ENCODE measurements at regions of chr5 and their contacts with region 1.

Region 1: GRCh38 chr5:9365512-9365911 is 180.4 kb downstream of the SEMA5A start:
- H3K4me3 Mint-ChIP-seq: no peak overlapping the region
- H3K27ac Mint-ChIP-seq: no peak overlapping the region
- H3K4me1 Mint-ChIP-seq: no peaks in the 10 kb centered on the region
- H3K27me3 Mint-ChIP-seq: peaks cover 1% of the 10 kb centered on the region

Region 2: DNA sequence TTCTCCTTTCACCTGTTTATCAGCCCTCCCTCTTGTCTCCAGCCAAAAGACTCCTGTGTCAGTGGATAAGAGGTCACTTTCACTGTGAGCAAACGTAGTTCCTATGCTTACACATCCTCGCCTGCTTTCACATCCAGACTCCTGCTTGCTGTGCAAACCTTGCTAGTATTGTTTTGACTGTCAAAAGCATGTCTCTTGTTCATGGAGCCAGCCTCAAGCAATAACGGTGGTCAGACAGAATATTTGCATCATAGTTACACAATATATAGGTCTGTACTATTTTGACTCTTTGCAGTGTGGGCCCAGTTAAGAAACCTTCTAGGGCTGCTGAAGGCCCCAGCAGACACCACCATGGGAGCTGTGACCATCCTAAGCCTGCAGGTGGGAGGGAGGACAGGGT is 239.7 kb before region 1 on chr5:
- intact Hi-C with region 1: no loop called
- H3K4me3 Mint-ChIP-seq: no peak overlapping the region
- H3K27ac Mint-ChIP-seq: no peak overlapping the region
- H3K4me1 Mint-ChIP-seq: no peaks in the 10 kb centered on the region
- H3K27me3 Mint-ChIP-seq: no peaks in the 10 kb centered on the region

Region 3: GRCh38 chr5:9283021-9283420 is 82.5 kb before region 1 on chr5:
- intact Hi-C with region 1: no loop called
- H3K4me3 Mint-ChIP-seq: no peak overlapping the region
- H3K27ac Mint-ChIP-seq: no peak overlapping the region
- H3K4me1 Mint-ChIP-seq: no peaks in the 10 kb centered on the region
- H3K27me3 Mint-ChIP-seq: no peaks in the 10 kb centered on the region

Region 4: DNA sequence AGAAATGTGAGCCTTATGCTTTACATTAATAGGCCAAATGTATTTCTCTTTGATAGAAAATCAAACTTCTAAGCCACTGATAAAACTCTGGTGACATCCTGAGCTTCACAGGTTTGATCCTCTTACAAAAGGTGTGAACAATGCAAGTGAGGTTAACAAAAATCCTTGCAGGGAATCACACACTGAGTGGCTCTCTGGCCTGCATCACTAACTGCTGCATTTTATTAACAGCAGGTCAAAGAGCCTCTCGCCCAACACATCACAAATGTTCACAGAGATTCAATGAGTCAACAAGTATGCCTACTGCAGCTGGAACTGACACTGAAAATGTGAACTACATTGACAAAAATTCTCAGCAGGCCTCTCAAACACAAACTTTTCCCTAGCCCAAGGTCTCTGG is 58.1 kb after region 1 on chr5:
- intact Hi-C with region 1: no loop called
- H3K4me3 Mint-ChIP-seq: no peak overlapping the region
- H3K27ac Mint-ChIP-seq: no peak overlapping the region
- H3K4me1 Mint-ChIP-seq: no peaks in the 10 kb centered on the region
- H3K27me3 Mint-ChIP-seq: no peaks in the 10 kb centered on the region

Region 5: GRCh38 chr5:9544502-9545135 is 179.1 kb after region 1 on chr5:
- intact Hi-C with region 1: loop called (anchors 5 kb)
- H3K4me3 Mint-ChIP-seq: no peak overlapping the region
- H3K27ac Mint-ChIP-seq: no peak overlapping the region
- H3K4me1 Mint-ChIP-seq: peaks cover 4% of the 10 kb centered on the region
- H3K27me3 Mint-ChIP-seq: peaks cover 51% of the 10 kb centered on the region